Activated B cell treated with CpG ODN at 0.5 μM for 24 hours (primary cell): ENCODE measurements at regions of chr1 and their contacts with region 1.

Region 1: GRCh38 chr1:65044378-65044777 is 78.0 kb upstream of the JAK1 start:
- DNase-seq: no peak
- ATAC-seq: no peak
- H3K4me3 Mint-ChIP-seq: no peak overlapping the region
- H3K27ac Mint-ChIP-seq: no peak overlapping the region
- H3K4me1 Mint-ChIP-seq: peaks cover 13% of the 10 kb centered on the region
- H3K27me3 Mint-ChIP-seq: no peaks in the 10 kb centered on the region
- CTCF ChIP-seq: no peak

Region 2: DNA sequence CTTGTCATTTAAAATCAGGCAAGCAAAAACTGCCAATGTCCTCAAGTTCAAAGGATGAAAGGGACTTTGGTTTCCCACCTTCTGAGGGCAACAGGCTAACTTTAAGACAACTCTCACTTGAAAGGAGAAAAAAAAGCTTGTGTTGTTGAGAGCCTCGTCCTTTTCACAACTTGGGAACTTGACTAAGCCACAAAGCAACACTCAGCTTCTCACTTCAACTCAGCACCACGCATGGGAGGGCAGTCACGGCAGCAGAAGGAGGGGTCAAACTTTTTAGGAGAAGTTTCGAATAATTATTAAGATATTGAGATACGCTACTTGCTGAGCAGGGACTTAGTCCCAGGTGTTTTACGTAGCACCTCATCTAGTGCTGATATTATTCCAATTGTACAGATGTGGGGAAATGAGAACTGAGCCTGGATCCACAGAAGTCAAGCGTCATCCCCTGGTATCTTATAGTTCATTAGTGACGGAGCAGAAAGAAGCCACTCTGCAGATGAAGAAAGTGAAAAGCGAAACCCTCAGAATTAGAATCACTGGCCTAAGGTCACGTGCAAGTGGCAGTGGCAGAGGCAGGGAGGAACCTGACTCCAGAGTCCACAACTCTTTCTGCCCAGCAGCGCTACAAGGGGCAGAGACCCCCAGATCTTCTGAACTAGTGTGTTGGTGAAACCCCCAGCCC is 161.7 kb before region 1 on chr1:
- CTCF ChIA-PET with region 1: no interaction called
- POLR2A ChIA-PET with region 1: no interaction called
- intact Hi-C with region 1: loop called (anchors 5 kb)
- DNase-seq: no peak
- ATAC-seq: peak; percentile 34
- H3K4me3 Mint-ChIP-seq: no peak overlapping the region
- H3K27ac Mint-ChIP-seq: peak overlapping the region; percentile 72
- H3K4me1 Mint-ChIP-seq: peaks cover 42% of the 10 kb centered on the region
- H3K27me3 Mint-ChIP-seq: no peaks in the 10 kb centered on the region
- CTCF ChIP-seq: no peak

Region 3: DNA sequence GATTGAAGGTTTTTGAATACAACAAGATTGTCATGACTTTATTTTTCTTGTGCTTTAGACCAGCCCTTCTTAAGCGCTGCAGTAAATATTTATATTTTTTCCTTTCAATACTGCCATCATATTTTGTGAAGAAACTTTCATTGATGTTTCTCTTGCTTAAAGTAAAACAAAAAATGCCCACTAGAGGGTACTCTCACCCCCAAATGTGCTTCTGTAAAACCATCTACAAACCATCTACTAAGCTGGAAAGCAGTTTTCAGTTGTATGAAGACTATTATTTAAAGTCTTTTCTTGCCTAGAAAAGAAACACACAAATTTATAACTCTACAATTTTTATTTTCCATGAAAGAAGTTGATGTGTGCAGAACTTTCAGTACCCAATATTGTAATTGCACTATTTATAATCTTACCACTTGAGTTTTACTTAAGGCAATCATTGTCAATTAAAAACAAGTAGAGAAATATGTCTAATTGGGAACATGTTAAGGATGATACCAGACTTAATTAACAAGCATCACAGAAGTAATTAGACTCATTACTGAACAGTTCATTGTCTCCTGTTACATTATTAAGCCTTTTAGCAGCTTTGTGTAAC is 386.8 kb after region 1 on chr1:
- CTCF ChIA-PET with region 1: no interaction called
- POLR2A ChIA-PET with region 1: no interaction called
- intact Hi-C with region 1: no loop called
- DNase-seq: no peak
- ATAC-seq: no peak
- H3K4me3 Mint-ChIP-seq: no peak overlapping the region
- H3K27ac Mint-ChIP-seq: no peak overlapping the region
- H3K4me1 Mint-ChIP-seq: no peaks in the 10 kb centered on the region
- H3K27me3 Mint-ChIP-seq: no peaks in the 10 kb centered on the region
- CTCF ChIP-seq: no peak

Region 4: DNA sequence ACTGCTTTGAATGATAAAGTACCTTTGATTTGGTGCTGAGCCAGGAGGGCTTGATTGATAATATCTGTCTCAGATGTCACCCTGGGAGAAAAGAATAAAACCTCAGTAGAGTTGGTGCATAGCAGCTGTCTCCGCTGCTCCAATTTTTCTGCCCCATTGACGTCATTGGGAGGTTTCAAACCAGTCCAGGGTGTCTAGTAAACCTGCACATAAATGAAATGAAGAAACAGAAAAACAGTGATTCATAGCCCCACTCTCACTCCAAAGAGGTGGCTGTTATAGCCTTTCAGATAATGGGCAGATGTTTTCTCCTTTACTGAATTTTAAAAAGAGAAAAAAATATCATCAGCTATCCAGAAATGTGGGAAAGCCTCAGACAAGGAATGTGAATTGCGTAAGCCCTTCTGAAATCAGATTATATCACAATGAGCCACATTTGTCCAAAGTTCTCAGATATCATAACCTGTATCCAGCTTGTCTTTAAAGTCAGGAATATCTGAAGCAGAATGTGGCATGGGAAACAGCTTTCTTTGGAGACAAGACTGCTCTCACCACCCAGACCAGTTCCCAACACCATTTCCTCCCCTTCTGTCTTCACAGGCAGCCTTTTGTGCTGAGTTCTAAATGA is 1138.3 kb after region 1 on chr1:
- CTCF ChIA-PET with region 1: no interaction called
- POLR2A ChIA-PET with region 1: no interaction called
- intact Hi-C with region 1: no loop called
- DNase-seq: no peak
- ATAC-seq: no peak
- H3K4me3 Mint-ChIP-seq: no peak overlapping the region
- H3K27ac Mint-ChIP-seq: no peak overlapping the region
- H3K4me1 Mint-ChIP-seq: no peaks in the 10 kb centered on the region
- H3K27me3 Mint-ChIP-seq: peaks cover 3% of the 10 kb centered on the region
- CTCF ChIP-seq: no peak